ENCODE measurements at regions of chr3 and their contacts with region 1.

Region 1: DNA sequence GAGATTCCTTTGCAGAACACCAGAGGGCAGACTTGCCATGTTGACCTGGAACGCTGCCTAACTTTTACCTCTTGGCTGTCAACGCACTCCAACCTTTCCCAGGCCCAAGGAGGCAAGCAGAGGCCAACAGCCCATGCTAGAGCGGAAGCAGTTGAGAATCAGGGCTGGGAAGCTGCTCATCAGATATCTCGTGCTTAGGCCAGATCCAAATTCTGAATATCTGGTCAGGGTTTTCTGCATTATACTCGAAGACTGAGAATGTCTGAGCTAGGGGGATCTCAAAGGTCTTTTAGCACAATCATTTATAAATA is 2.5 kb downstream of the XIRP1 start:
- DNase-seq: peak; percentile 58
- H3K4me3 ChIP-seq: no peak overlapping the region
- H3K27ac ChIP-seq: no peak overlapping the region
- H3K4me1 ChIP-seq: no peaks in the 10 kb centered on the region
- H3K27me3 ChIP-seq: no peaks in the 10 kb centered on the region
- CTCF ChIP-seq: peak; percentile 69 to 81

Region 2: GRCh38 chr3:39086144-39086543 is 103.8 kb before region 1 on chr3:
- CTCF ChIA-PET with region 1: no interaction called
- dilution Hi-C with region 1: no loop called
- in situ Hi-C with region 1: no loop called
- intact Hi-C with region 1: no loop called
- DNase-seq: no peak
- H3K4me3 ChIP-seq: no peak overlapping the region
- H3K27ac ChIP-seq: no peak overlapping the region
- H3K4me1 ChIP-seq: no peaks in the 10 kb centered on the region
- H3K27me3 ChIP-seq: no peaks in the 10 kb centered on the region
- CTCF ChIP-seq: no peak

Region 3: GRCh38 chr3:39107388-39108199 is 82.3 kb before region 1 on chr3 and contains the starts of genes GORASP1 and TTC21A:
- CTCF ChIA-PET with region 1: no interaction called
- dilution Hi-C with region 1: loop called (anchors 5 kb)
- in situ Hi-C with region 1: no loop called
- intact Hi-C with region 1: no loop called
- DNase-seq: peak; percentile 81
- H3K4me3 ChIP-seq: peak within 1 kb of the TSS; percentile 72 to 95 (median 91)
- H3K27ac ChIP-seq: peak within 1 kb of the TSS; percentile 86
- H3K4me1 ChIP-seq: peaks cover 27% of the 10 kb centered on the region
- H3K27me3 ChIP-seq: no peaks in the 10 kb centered on the region
- CTCF ChIP-seq: no peak
- total RNA-seq, gene GORASP1: 47.0 to 51.3 TPM
- total RNA-seq, gene TTC21A: 5.2 to 5.7 TPM

Region 4: GRCh38 chr3:39126532-39127071 is 63.3 kb before region 1 on chr3:
- CTCF ChIA-PET with region 1: no interaction called
- dilution Hi-C with region 1: no loop called
- in situ Hi-C with region 1: no loop called
- intact Hi-C with region 1: loop called (anchors 2 kb)
- DNase-seq: peak; percentile 24
- H3K4me3 ChIP-seq: no peak overlapping the region
- H3K27ac ChIP-seq: no peak overlapping the region
- H3K4me1 ChIP-seq: peaks cover 14% of the 10 kb centered on the region
- H3K27me3 ChIP-seq: no peaks in the 10 kb centered on the region
- CTCF ChIP-seq: peak; percentile 28 to 67

Region 5: GRCh38 chr3:39378088-39378487 is 188.2 kb after region 1 on chr3:
- CTCF ChIA-PET with region 1: no interaction called
- dilution Hi-C with region 1: no loop called
- in situ Hi-C with region 1: loop called in 1 of 2 experiments (anchors 25 kb)
- intact Hi-C with region 1: loop called (anchors 1 kb)
- DNase-seq: peak; percentile 43
- H3K4me3 ChIP-seq: no peak overlapping the region
- H3K27ac ChIP-seq: no peak overlapping the region
- H3K4me1 ChIP-seq: peaks cover 5% of the 10 kb centered on the region
- H3K27me3 ChIP-seq: no peaks in the 10 kb centered on the region
- CTCF ChIP-seq: peak; percentile 84 to 91

Measured in mammary epithelial cell (primary cell).